WTC11 (cell line): ENCODE measurements at regions of chr2 and their contacts with region 1.

Region 1: DNA sequence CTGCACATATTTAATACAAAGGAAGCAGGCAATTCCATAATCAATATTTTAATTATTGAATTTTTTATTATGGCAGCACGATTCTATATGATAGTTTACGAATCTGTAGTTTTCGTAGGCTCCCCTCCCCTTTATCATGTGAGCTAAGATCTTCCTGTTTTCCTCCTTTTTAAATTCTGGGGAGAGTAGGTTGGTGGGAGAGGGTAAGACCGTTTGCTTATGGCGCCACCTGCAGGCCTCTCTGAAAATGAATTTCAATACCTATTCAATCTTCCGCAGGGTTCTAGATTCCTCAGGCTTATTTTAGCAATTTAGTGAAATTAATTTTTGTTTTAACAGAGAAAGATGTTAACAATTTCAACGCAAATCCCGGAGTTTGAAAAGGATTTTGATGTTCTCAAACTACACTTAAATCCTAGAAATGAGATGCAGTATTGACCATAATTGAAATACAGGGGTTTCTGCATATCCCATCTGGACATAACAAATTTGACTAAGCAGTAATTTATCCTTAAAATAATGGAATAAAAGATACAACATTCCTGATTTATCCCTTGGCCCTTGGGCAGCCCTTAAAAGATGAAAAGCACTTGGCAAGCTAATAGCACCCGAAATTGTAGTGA is 12.8 kb upstream of the GBX2 start:
- DNase-seq: peak; percentile 78
- ATAC-seq: peak; percentile 11; the same call in 1 of the 2 replicates
- H3K4me3 Mint-ChIP-seq: no peak overlapping the region
- H3K27ac Mint-ChIP-seq: no peak overlapping the region
- H3K4me1 Mint-ChIP-seq: peaks cover 23% of the 10 kb centered on the region
- H3K27me3 Mint-ChIP-seq: peaks cover 40% of the 10 kb centered on the region
- CTCF ChIP-seq: peak; percentile 78

Region 2: DNA sequence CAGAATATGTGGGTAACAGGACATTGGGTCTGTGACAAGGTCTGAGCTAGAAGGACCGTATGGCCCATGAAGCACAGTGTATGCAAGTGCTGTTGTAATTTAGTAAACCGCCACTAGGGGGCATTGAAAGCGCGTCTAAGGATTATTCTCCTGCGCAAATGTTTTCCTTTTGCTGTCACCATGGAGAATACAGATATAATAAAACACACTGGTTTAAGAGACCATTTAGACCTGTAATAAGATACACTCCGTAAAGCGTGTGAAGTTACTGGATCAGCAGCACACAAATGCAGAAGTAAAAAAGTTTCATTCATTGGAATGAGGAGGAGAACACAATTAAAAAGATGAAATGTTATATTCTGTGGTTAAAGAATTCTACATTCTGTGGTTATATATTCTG is 414.7 kb before region 1 on chr2:
- CTCF ChIA-PET with region 1: interaction called, 37 read pairs
- POLR2A ChIA-PET with region 1: no interaction called
- DNase-seq: peak; percentile 59
- ATAC-seq: peak; percentile 91
- H3K4me3 Mint-ChIP-seq: no peak overlapping the region
- H3K27ac Mint-ChIP-seq: no peak overlapping the region; the same call in 1 of the 2 replicates
- H3K4me1 Mint-ChIP-seq: no peaks in the 10 kb centered on the region
- H3K27me3 Mint-ChIP-seq: no peaks in the 10 kb centered on the region
- CTCF ChIP-seq: peak; percentile 95

Region 3: GRCh38 chr2:235820571-235820970 is 360.4 kb before region 1 on chr2:
- CTCF ChIA-PET with region 1: interaction called, 3 read pairs
- POLR2A ChIA-PET with region 1: interaction called, 12 read pairs
- DNase-seq: no peak
- ATAC-seq: no peak
- H3K4me3 Mint-ChIP-seq: no peak overlapping the region
- H3K27ac Mint-ChIP-seq: no peak overlapping the region
- H3K4me1 Mint-ChIP-seq: no peaks in the 10 kb centered on the region
- H3K27me3 Mint-ChIP-seq: no peaks in the 10 kb centered on the region
- CTCF ChIP-seq: no peak

Region 4: GRCh38 chr2:235966396-235966795 is 214.5 kb before region 1 on chr2:
- CTCF ChIA-PET with region 1: interaction called, 13 read pairs
- POLR2A ChIA-PET with region 1: no interaction called
- DNase-seq: no peak
- ATAC-seq: peak; percentile 75
- H3K4me3 Mint-ChIP-seq: no peak overlapping the region
- H3K27ac Mint-ChIP-seq: no peak overlapping the region
- H3K4me1 Mint-ChIP-seq: peaks cover 12% of the 10 kb centered on the region
- H3K27me3 Mint-ChIP-seq: no peaks in the 10 kb centered on the region
- CTCF ChIP-seq: no peak

Region 5: DNA sequence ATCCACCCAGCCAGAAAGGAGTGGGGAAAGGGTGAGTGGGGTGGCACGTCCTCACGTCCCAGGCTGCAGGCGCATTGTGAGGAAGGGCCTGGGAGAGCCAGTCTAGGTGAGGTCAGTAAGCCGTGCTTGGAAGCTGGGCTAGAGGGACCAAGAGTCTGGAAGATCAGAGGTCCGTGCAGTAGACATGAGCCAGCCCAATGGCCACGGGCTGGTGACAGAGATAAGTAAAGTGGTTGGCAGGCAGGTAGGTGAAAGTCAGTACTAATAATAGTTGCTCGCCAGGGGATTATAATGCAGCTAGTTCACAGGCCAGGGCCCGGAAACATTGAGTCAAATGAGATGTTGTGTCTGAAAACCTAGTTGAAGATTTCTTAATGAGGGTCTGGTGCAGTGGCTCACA is 146.0 kb before region 1 on chr2:
- CTCF ChIA-PET with region 1: interaction called, 11 read pairs
- POLR2A ChIA-PET with region 1: no interaction called
- DNase-seq: no peak
- ATAC-seq: no peak
- H3K4me3 Mint-ChIP-seq: no peak overlapping the region
- H3K27ac Mint-ChIP-seq: no peak overlapping the region
- H3K4me1 Mint-ChIP-seq: peaks cover 13% of the 10 kb centered on the region
- H3K27me3 Mint-ChIP-seq: no peaks in the 10 kb centered on the region
- CTCF ChIP-seq: no peak

Region 6: GRCh38 chr2:236162882-236163470 is 18.0 kb before region 1 on chr2:
- CTCF ChIA-PET with region 1: interaction called, 35 read pairs
- POLR2A ChIA-PET with region 1: no interaction called
- DNase-seq: peak; percentile 44
- ATAC-seq: no peak
- H3K4me3 Mint-ChIP-seq: peak overlapping the region; percentile 37; the same call in 1 of the 2 replicates
- H3K27ac Mint-ChIP-seq: no peak overlapping the region
- H3K4me1 Mint-ChIP-seq: peaks cover 60% of the 10 kb centered on the region
- H3K27me3 Mint-ChIP-seq: peaks cover 90% of the 10 kb centered on the region
- CTCF ChIP-seq: no peak

Region 7: GRCh38 chr2:236209535-236209934 is 28.6 kb after region 1 on chr2:
- CTCF ChIA-PET with region 1: interaction called, 18 read pairs
- POLR2A ChIA-PET with region 1: no interaction called
- DNase-seq: peak; percentile 44
- ATAC-seq: peak; percentile 68
- H3K4me3 Mint-ChIP-seq: no peak overlapping the region
- H3K27ac Mint-ChIP-seq: no peak overlapping the region
- H3K4me1 Mint-ChIP-seq: peaks cover 18% of the 10 kb centered on the region
- H3K27me3 Mint-ChIP-seq: no peaks in the 10 kb centered on the region
- CTCF ChIP-seq: no peak